Posterior vena cava (tissue), 2 donors: ENCODE measurements at regions of chr12 and their contacts with region 1.

Region 1: GRCh38 chr12:129276361-129277060 is 423.2 kb downstream of the GLT1D1 start:
- DNase-seq: no peak

Region 2: GRCh38 chr12:128982933-128983332 is 293.6 kb before region 1 on chr12:
- intact Hi-C with region 1: no loop called
- DNase-seq: no peak

Region 3: DNA sequence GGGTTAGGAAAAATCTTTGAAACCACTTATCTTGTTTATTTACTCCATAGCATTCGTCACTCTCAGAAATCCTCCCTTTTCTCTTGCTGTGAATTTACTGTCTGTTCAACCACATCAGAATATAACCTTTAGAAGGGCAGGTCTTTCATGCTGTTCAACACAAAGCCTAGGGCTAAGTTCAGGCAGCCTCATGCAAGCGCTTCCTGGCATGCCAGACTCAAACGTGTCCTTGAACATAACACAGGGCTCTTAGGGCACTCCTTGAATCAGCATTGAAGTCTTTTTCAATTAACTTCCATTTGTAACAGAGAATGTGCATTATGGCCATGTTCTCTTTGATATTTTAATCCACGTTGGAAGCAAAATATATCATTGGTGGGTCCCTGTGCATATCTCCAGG is 45.5 kb before region 1 on chr12:
- intact Hi-C with region 1: loop called in 1 of 2 experiments (anchors 1 kb)
- DNase-seq: no peak